GM10248 (cell line): ENCODE measurements at regions of chr11 and their contacts with region 1.

Region 1: DNA sequence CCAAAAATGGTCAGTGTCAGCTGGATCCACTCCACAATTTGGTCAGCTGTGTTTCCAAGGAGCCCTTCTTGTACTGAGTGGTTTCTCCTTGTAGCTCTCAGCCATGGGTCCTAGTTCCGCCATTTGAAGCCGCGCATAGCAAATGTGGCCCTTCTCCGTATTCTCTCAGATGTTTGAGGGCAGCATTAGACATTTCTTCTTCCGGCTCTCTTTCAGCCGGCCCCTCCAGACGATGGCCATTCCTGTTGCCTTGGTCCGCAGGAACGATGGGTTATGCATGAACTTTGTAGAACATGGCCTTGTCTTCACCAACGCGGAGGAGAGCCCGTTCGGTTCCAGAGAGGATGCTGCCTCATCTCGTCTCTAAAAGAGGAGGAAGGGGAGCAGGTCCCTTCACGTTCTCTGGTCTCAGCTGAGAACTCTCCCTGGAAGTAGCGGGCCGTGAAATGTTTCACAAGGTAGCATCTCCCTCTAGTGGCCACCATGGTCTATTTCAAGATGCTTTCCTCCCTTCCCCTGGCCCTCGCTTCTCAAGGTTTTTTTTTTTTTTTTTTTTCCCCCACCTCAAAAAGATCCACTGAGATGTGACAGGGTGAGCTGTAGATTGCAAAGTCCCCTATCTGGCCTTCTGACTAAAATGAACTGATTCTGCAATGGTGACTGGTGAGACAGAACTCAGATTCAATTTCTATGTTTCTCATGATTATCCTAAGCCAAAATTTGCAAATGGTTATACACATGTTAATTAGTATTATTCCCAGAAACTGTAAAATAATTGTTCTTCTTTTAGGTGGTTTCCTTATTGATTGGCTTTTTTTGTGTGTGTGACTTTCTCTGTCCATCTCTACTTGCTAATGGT is 19.8 kb upstream of the PLET1 start:
- DNase-seq: peak; percentile 82
- CTCF ChIP-seq: peak; percentile 77

Region 2: DNA sequence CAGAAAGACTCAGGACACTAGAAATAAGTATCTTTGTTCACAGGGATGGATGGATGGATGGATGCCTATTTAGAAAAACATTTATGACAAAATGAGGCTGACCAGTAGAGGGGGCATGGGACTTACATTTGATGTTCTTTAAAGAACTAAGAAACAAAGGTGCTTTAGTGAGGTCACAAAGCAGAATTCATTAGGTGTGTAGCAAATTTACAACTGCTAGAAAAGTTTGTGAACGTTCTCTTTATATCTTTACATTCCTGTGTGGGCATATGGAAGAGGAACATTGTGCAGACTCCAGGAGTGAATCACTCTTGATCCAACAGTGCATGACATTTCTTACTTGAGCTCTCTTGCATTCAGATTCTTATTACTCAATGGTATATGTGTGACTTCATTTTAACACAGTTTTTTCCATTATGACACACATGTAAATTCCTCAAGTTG is 694.1 kb before region 1 on chr11:
- CTCF ChIA-PET with region 1: interaction called, 10 read pairs
- POLR2A ChIA-PET with region 1: no interaction called
- DNase-seq: peak; percentile 43
- CTCF ChIP-seq: peak; percentile 53

Region 3: GRCh38 chr11:112134473-112134872 is 146.0 kb before region 1 on chr11:
- CTCF ChIA-PET with region 1: no interaction called
- POLR2A ChIA-PET with region 1: no interaction called
- DNase-seq: no peak
- CTCF ChIP-seq: no peak

Region 4: GRCh38 chr11:112219476-112220232 is 60.8 kb before region 1 on chr11:
- CTCF ChIA-PET with region 1: interaction called, 374 read pairs
- POLR2A ChIA-PET with region 1: interaction called, 9 read pairs
- DNase-seq: peak; percentile 68
- CTCF ChIP-seq: peak; percentile 60

Region 5: DNA sequence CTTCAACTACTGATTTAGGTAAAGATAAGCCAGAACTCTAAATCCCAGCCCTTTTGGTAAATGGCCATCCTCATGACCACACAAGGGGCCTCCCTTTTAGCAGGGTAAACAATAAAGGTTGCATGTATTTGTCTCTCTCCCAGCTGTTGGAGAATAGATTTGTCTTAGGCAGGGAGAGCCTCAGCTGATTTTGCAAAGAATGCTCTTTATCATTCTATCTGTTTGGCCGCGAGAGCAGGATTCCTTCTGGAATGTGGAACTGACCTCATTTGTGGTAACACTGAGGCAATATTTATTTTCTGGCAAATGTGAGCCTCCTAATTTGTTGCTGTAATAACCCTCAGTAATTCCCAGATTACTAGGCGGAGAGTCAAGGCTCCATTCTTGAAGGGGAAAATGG is 39.0 kb before region 1 on chr11:
- CTCF ChIA-PET with region 1: interaction called, 12 read pairs
- POLR2A ChIA-PET with region 1: no interaction called
- DNase-seq: no peak
- CTCF ChIP-seq: no peak

Region 6: DNA sequence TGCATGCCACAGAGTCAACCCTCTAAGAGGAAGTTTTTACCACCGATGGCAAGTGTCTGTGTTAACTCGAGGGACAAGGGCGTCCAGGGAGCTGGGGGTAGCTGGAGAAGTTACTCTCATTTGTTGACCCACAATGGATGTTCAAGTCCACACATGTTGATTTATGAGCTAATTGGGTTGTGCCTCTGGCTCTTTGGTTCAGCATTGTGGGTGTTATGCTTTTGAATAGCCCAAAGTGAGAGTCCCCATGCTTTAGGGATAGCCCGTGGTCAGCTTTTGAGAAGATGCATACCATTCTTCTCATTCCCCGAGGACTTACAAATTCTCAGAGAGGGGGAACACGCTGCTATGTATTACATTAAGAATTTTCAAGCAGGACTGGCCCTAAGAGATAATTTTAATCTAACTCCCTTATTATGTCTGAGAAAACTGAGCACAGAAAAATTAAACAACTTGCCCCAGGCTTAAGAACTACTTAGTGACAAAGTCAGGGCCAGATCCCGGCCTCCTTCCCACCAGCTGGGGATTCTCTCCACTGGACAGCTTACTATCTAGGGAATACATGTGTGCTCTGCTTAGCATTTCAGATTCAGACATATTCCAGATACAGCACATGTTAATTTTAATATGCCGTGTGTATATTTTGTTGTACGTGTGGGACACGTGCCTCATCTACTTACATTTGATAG is 14.6 kb before region 1 on chr11:
- CTCF ChIA-PET with region 1: interaction called, 40 read pairs
- POLR2A ChIA-PET with region 1: no interaction called
- DNase-seq: no peak
- CTCF ChIP-seq: no peak

Region 7: DNA sequence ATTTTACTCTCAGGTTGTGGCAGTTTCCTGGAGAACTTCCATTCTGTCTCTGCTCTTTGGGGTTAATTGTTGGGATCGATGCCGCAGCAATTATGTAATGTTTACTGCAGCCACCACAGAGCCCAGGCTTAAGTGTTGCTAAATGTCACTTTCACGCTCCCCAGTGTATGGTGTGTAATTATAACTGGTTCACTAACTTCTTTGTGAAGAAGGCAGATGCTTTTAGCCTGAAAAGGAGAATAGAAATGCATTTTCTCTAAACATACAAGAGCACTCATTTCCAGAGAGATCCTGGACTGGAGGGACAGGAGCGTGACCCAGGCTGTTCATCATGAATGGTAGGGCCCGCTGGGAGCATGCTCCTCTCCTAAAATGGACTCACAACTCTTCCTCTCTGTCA is 112.4 kb after region 1 on chr11:
- CTCF ChIA-PET with region 1: no interaction called
- POLR2A ChIA-PET with region 1: no interaction called
- DNase-seq: no peak
- CTCF ChIP-seq: no peak